ENCODE measurements at regions of chr15 and their contacts with region 1.

Region 1: GRCh38 chr15:31200735-31201151 is 99.2 kb upstream of the TRPM1 start:
- DNase-seq: peak; percentile 65 to 85 (median 73)
- ATAC-seq: peak; percentile 84
- H3K4me3 ChIP-seq: no peak overlapping the region
- H3K4me3 Mint-ChIP-seq: no peak overlapping the region
- H3K27ac ChIP-seq: no peak overlapping the region
- H3K27ac Mint-ChIP-seq: no peak overlapping the region
- H3K4me1 ChIP-seq: peaks cover 41% of the 10 kb centered on the region
- H3K4me1 Mint-ChIP-seq: peaks cover 22% of the 10 kb centered on the region
- H3K27me3 ChIP-seq: no peaks in the 10 kb centered on the region
- H3K27me3 Mint-ChIP-seq: no peaks in the 10 kb centered on the region
- CTCF ChIP-seq: peak; percentile 57

Region 2: DNA sequence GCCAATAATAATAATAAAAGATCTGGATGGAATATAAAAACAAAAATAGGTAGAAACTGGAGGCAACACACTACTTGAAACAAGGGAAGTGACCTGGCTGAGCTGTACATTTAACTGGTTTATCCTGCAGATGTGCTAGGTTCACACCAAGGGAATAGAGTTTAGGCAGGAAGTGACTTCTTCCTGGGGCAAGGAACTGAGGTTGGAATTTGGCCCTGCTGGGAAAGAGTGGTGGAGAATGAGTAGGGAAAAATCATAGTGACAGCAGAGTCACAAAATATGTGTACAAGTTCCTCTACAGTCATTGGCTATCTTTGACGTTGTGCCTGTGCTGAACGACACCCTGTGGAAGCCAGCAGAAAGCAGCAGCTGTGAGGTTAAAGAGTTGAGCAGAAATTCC is 530.7 kb before region 1 on chr15:
- CTCF ChIA-PET with region 1: no interaction called
- POLR2A ChIA-PET with region 1: no interaction called
- intact Hi-C with region 1: loop called in 1 of 2 experiments (anchors 10 kb)
- DNase-seq: no peak
- ATAC-seq: no peak
- H3K4me3 ChIP-seq: no peak overlapping the region
- H3K4me3 Mint-ChIP-seq: no peak overlapping the region
- H3K27ac ChIP-seq: no peak overlapping the region
- H3K27ac Mint-ChIP-seq: no peak overlapping the region
- H3K4me1 ChIP-seq: no peaks in the 10 kb centered on the region
- H3K4me1 Mint-ChIP-seq: no peaks in the 10 kb centered on the region
- H3K27me3 ChIP-seq: no peaks in the 10 kb centered on the region
- H3K27me3 Mint-ChIP-seq: no peaks in the 10 kb centered on the region
- CTCF ChIP-seq: no peak

Region 3: GRCh38 chr15:30985081-30985531 is 215.6 kb before region 1 on chr15:
- CTCF ChIA-PET with region 1: no interaction called
- POLR2A ChIA-PET with region 1: no interaction called
- intact Hi-C with region 1: loop called in 1 of 2 experiments (anchors 5 kb)
- DNase-seq: no peak
- ATAC-seq: no peak
- H3K4me3 ChIP-seq: no peak overlapping the region
- H3K4me3 Mint-ChIP-seq: peak overlapping the region; percentile 3
- H3K27ac ChIP-seq: no peak overlapping the region
- H3K27ac Mint-ChIP-seq: peak overlapping the region; percentile 9
- H3K4me1 ChIP-seq: peaks cover 27% of the 10 kb centered on the region
- H3K4me1 Mint-ChIP-seq: peaks cover 71% of the 10 kb centered on the region
- H3K27me3 ChIP-seq: no peaks in the 10 kb centered on the region
- H3K27me3 Mint-ChIP-seq: no peaks in the 10 kb centered on the region
- CTCF ChIP-seq: no peak

Region 4: DNA sequence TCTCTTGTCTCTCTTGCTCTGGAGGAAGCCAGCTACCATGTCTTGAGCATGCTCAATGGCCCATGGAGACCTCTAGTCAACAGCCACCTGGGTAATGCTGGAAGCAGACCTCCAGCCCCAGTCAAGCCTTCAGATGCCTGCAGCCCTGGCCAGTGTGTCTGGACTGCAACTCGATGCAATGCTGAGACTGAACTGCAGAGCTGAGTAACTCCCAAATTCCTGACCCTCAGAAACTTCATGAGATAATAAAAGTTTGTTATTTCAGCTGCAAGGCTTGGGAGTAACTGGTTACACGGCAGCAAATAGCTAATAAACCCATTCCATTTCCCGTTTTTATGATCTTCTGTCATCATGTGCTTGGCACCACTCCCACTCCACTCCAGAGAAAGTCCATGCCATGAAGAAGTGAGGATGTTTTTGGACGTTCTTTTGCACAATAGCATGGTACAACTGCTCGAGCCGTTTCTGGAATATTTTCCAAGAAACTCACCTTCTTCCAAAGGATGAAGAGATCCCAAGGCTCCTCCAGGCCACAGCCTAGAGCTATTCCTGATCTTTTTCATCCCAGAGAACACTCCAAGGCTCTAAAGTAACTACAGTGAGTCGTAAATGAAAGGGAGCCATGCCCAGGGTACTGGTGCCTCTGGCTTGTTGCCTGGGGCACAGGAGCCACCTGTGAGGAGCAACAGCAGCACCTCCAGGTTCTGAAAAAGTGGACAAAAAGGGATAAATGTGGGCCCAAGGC is 53.9 kb after region 1 on chr15:
- CTCF ChIA-PET with region 1: no interaction called
- POLR2A ChIA-PET with region 1: no interaction called
- intact Hi-C with region 1: no loop called
- DNase-seq: no peak
- ATAC-seq: no peak
- H3K4me3 ChIP-seq: no peak overlapping the region
- H3K4me3 Mint-ChIP-seq: no peak overlapping the region
- H3K27ac ChIP-seq: no peak overlapping the region
- H3K27ac Mint-ChIP-seq: no peak overlapping the region
- H3K4me1 ChIP-seq: peaks cover 28% of the 10 kb centered on the region
- H3K4me1 Mint-ChIP-seq: peaks cover 32% of the 10 kb centered on the region
- H3K27me3 ChIP-seq: peaks cover 0 to 4% of the 10 kb centered on the region in 2 experiments
- H3K27me3 Mint-ChIP-seq: no peaks in the 10 kb centered on the region
- CTCF ChIP-seq: no peak

Region 5: GRCh38 chr15:31391687-31392671 is 191.2 kb after region 1 on chr15:
- CTCF ChIA-PET with region 1: no interaction called
- POLR2A ChIA-PET with region 1: no interaction called
- intact Hi-C with region 1: loop called in 1 of 2 experiments (anchors 5 kb)
- DNase-seq: peak; percentile 65 to 93 (median 82)
- ATAC-seq: peak; percentile 87
- H3K4me3 ChIP-seq: peak overlapping the region; percentile 75
- H3K4me3 Mint-ChIP-seq: peak overlapping the region; percentile 95
- H3K27ac ChIP-seq: peak overlapping the region; percentile 8 to 37
- H3K27ac Mint-ChIP-seq: peak overlapping the region; percentile 86
- H3K4me1 ChIP-seq: peaks cover 51% of the 10 kb centered on the region
- H3K4me1 Mint-ChIP-seq: peaks cover 52% of the 10 kb centered on the region
- H3K27me3 ChIP-seq: no peaks in the 10 kb centered on the region
- H3K27me3 Mint-ChIP-seq: no peaks in the 10 kb centered on the region
- CTCF ChIP-seq: no peak

Measured in CD4-positive, alpha-beta T cell (primary cell).